Activated naive CD4-positive, alpha-beta T cell treated with anti-CD3 and anti-CD28 coated beads for 36 hours (primary cell): ENCODE measurements at regions of chr7 and their contacts with region 1.

Region 1: GRCh38 chr7:28037220-28038010 is 143.2 kb downstream of the JAZF1 start:
- DNase-seq: peak; percentile 50
- H3K4me3 Mint-ChIP-seq: no peak overlapping the region
- H3K27ac Mint-ChIP-seq: no peak overlapping the region
- H3K4me1 Mint-ChIP-seq: peaks cover 26% of the 10 kb centered on the region
- H3K27me3 Mint-ChIP-seq: peaks cover 16% of the 10 kb centered on the region

Region 2: GRCh38 chr7:27134392-27134791 is 903.0 kb before region 1 on chr7:
- CTCF ChIA-PET with region 1: no interaction called
- intact Hi-C with region 1: loop called (anchors 2 kb)
- DNase-seq: peak; percentile 64
- H3K4me3 Mint-ChIP-seq: no peak overlapping the region
- H3K27ac Mint-ChIP-seq: peak overlapping the region; percentile 51
- H3K4me1 Mint-ChIP-seq: peaks cover 19% of the 10 kb centered on the region
- H3K27me3 Mint-ChIP-seq: peaks cover 54% of the 10 kb centered on the region

Region 3: GRCh38 chr7:27784393-27785053 is 252.9 kb before region 1 on chr7:
- CTCF ChIA-PET with region 1: no interaction called
- intact Hi-C with region 1: loop called (anchors 1 kb)
- DNase-seq: peak; percentile 26
- H3K4me3 Mint-ChIP-seq: no peak overlapping the region
- H3K27ac Mint-ChIP-seq: no peak overlapping the region
- H3K4me1 Mint-ChIP-seq: peaks cover 37% of the 10 kb centered on the region
- H3K27me3 Mint-ChIP-seq: no peaks in the 10 kb centered on the region

Region 4: DNA sequence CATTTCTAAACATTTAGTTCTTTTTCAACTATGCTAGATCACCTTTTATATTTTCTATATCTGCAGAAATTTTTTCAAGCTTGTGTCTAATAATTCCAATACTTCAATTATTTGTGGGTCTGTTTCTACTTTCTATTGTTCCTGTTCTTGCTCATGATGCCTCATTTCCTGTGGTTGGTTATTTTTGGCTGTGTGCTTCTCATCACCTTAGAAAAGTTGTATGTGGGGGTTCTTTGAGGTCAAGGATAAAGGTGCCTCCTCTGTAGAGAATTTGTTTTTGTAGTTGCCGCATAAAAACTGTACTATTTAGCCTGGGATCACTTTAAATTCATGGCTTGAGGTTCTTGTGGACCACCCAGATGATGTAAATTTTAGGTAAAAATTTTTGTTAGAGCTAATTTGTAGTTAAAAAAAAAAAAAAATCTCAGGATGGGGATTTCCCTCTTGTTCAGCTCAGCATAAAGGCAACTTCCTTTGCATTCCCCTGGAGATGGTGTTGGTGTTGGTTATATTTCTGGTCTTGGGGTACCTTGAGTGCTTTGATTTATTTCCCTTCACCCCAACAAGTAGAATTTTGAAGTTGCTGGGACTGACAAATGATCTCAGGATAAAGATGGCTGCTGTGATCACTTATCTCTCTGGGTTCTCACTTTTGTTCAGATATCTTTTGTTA is 170.2 kb after region 1 on chr7:
- CTCF ChIA-PET with region 1: no interaction called
- intact Hi-C with region 1: loop called (anchors 1 kb)
- DNase-seq: peak; percentile 30
- H3K4me3 Mint-ChIP-seq: no peak overlapping the region
- H3K27ac Mint-ChIP-seq: peak overlapping the region; percentile 43
- H3K4me1 Mint-ChIP-seq: peaks cover 39% of the 10 kb centered on the region
- H3K27me3 Mint-ChIP-seq: peaks cover 7% of the 10 kb centered on the region

Region 5: DNA sequence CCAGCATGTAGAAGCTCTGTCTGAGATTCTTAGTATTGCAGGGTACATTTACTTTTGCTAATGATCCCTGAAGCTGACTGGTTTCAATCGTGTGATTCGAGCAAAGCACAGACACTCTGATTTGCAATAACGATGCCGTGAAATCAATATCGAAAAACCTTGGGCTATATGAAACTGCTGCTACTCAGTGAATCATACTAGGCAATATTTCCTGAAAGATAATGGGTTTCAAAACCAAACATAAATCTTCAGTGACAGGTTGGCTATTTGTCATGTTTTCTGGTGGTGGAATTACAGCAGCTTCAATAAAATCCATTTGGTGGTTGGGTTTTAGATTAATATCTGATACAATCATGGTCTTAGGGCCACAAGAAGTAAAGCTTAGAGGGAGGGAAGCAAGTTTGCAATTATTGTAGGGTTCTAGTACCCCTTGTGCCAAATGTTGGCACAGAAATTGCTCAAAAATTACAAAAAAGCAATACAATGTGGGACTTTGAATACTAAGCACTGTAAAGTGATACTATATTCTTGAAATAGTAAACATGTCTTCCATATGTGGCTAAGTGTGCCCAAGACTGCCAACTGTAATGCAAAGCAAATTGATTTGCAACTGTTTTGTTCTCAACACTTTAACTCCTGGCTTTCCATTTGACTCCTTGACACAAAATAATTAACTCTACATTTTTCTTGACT is 255.6 kb after region 1 on chr7:
- CTCF ChIA-PET with region 1: no interaction called
- intact Hi-C with region 1: loop called (anchors 5 kb)
- DNase-seq: peak; percentile 39
- H3K4me3 Mint-ChIP-seq: no peak overlapping the region
- H3K27ac Mint-ChIP-seq: no peak overlapping the region
- H3K4me1 Mint-ChIP-seq: peaks cover 20% of the 10 kb centered on the region
- H3K27me3 Mint-ChIP-seq: peaks cover 25% of the 10 kb centered on the region

Region 6: GRCh38 chr7:29017713-29018112 is 980.3 kb after region 1 on chr7:
- CTCF ChIA-PET with region 1: no interaction called
- intact Hi-C with region 1: no loop called
- DNase-seq: no peak
- H3K4me3 Mint-ChIP-seq: no peak overlapping the region
- H3K27ac Mint-ChIP-seq: no peak overlapping the region
- H3K4me1 Mint-ChIP-seq: no peaks in the 10 kb centered on the region
- H3K27me3 Mint-ChIP-seq: no peaks in the 10 kb centered on the region